B cell (primary cell): ENCODE measurements at regions of chr1 and their contacts with region 1.

Region 1: DNA sequence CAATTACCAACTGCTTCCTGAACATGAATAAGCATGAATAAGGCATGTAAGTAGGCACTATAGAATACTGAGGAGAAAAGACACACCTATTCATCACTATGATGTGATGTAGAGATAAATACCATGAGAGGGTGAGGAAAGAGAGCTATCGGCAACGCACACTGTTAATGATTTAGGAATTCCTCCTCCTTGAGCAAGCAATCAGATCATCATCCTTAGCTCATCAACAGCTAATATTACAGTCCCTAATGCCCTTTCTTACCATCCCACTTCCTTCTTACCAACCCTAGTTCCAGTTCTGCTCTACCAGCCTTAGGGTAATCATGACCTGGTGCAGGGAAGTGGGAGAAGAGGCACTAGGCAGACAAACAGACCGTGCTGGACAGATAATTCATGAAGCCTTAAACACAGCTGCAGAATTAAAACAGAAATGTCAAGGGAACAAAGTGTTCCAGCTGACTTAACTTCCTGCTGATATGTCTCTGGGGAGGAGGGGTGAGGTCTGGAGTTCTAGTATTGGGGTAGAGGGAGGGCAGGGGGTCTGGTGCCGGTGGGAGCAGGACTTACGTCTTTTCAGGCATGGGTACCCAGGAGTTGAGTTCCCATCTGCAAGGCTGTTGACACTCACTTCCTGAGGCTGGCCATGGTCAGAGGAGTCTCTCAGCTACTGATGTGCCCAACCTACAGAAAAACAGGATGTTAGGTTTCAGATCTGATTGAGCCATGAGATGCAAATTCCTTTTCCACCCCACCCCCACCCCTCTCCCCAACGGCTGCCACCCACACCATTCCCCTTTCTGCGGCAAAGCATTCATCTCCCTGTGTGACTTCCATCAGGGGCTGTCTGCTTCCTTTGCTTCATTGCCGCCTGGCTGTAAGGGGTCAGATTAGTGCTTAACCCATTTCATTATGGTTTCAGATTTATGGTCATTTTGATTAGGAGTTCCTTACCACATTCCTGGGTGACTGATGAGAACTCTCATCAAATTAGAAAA is 12.6 kb upstream of the RCSD1 start:
- DNase-seq: peak; percentile 94
- ATAC-seq: peak; percentile 90
- H3K4me3 ChIP-seq: peak overlapping the region; percentile 42 to 81 (median 58)
- H3K4me3 Mint-ChIP-seq: peak overlapping the region; percentile 84
- H3K27ac ChIP-seq: peak overlapping the region; percentile 89 to 97
- H3K27ac Mint-ChIP-seq: peak overlapping the region; percentile 92
- H3K4me1 ChIP-seq: peaks cover 87 to 92% of the 10 kb centered on the region in 2 donors
- H3K4me1 Mint-ChIP-seq: peaks cover 86% of the 10 kb centered on the region
- H3K27me3 ChIP-seq: no peaks in the 10 kb centered on the region
- H3K27me3 Mint-ChIP-seq: no peaks in the 10 kb centered on the region
- CTCF ChIP-seq: no peak

Region 2: DNA sequence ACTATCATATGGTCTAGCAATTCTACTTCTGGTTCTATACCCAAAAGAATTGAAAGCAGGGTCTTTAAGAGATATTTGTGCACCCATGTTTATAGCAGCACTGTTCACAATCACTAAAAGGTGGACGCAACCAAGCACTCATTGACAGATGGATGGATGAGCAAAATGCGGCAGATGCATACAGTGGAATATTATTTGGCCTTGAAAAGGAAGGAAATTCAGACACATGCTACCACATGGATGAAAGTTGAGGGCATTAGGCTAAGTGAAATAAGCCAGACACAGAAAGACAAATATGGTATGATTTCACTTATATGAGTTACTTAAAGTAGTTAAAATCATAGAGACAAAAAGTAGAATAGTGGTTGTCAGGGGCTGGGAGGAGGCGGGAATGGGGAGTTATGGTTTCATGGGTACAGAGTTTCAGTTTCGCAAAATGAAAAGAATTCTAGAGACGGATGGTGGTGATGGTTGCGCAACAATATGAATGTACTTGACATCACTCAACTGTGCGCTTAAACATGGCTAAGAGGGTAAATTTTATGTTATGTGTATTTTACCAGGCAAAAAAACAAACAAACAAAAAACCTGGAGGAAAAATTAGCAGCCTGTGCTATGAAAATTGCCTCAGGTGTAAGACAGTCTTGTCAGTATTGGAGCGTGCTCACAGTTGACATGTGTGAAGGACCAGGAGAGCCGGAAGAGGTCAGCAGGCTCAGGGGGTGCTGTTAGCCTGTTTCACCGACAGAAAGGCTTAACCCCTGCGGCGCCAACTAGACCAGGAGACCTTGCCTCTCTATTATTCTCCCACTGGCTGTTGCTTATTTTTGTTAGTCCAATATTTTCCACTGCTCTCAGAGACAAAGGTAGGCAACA is 125.6 kb before region 1 on chr1:
- CTCF ChIA-PET with region 1: no interaction called
- POLR2A ChIA-PET with region 1: no interaction called
- intact Hi-C with region 1: no loop called
- DNase-seq: no peak
- ATAC-seq: no peak
- H3K4me3 ChIP-seq: no peak overlapping the region
- H3K4me3 Mint-ChIP-seq: no peak overlapping the region
- H3K27ac ChIP-seq: no peak overlapping the region
- H3K27ac Mint-ChIP-seq: no peak overlapping the region
- H3K4me1 ChIP-seq: no peaks in the 10 kb centered on the region
- H3K4me1 Mint-ChIP-seq: no peaks in the 10 kb centered on the region
- H3K27me3 ChIP-seq: peaks cover 0 to 33% (median 25%) of the 10 kb centered on the region in 4 experiments
- H3K27me3 Mint-ChIP-seq: peaks cover 47% of the 10 kb centered on the region
- CTCF ChIP-seq: no peak

Region 3: GRCh38 chr1:167635156-167635648 is 17.8 kb after region 1 on chr1:
- CTCF ChIA-PET with region 1: interaction called, 72 read pairs
- POLR2A ChIA-PET with region 1: interaction called, 289 read pairs
- intact Hi-C with region 1: no loop called
- DNase-seq: no peak
- ATAC-seq: no peak
- H3K4me3 ChIP-seq: no peak overlapping the region
- H3K4me3 Mint-ChIP-seq: peak overlapping the region; percentile 98
- H3K27ac ChIP-seq: peak overlapping the region in 1 of 2 donors; percentile 93
- H3K27ac Mint-ChIP-seq: peak overlapping the region; percentile 55
- H3K4me1 ChIP-seq: peaks cover 72 to 77% of the 10 kb centered on the region in 2 donors
- H3K4me1 Mint-ChIP-seq: peaks cover 83% of the 10 kb centered on the region
- H3K27me3 ChIP-seq: no peaks in the 10 kb centered on the region
- H3K27me3 Mint-ChIP-seq: no peaks in the 10 kb centered on the region
- CTCF ChIP-seq: no peak